Cardiac septum (tissue), 1 donor: ENCODE measurements at regions of chr5 and their contacts with region 1.

Region 1: DNA sequence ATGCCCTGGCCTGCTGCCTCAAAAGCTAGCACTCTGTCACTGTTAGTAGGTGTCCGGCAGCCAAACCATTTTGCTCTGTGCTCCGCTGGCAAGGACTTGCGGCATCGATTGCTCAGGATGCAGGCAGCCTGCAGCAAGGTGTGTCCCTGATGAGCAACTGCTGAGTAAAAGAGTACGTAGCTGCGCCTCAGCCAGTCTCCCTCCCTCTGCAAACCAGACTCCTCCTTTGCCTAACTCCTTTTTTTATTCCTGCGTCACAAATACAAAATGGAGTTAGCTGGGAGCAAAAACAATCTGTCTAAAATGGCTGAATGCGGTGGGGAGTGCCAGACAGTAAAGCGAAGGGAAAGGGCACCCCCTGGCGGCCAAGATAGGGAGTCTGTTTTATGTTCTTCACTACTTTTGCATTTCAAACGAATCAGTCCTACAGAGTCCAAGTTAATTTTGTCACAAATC is 61.1 kb downstream of the DIAPH1 start:
- DNase-seq: peak; percentile 89

Region 2: DNA sequence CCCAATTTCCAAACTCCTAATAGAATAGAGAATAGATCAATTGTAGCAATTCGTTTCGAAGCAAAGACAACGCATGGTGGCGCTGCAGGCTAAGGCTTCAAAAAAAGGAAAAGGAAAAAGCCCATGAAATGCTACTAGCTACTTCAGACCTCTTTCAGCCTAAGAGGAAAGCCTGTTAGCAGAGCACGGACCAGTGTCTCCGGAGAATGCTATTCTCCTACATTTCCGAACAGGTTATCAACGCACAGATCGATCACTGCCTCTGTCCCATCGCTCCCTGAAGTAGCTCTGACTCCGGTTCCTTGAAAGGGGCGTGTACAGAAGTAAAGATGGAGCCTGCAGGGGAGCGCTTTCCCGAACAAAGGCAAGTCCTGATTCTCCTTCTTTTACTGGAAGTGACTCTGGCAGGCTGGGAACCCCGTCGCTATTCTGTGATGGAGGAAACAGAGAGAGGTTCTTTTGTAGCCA is 312.4 kb before region 1 on chr5 and contains the start of gene PCDHB15:
- intact Hi-C with region 1: loop called (anchors 2 kb)
- DNase-seq: no peak
- total RNA-seq, gene PCDHB15: 9.9 TPM

Region 3: GRCh38 chr5:141320225-141321169 is 237.2 kb before region 1 on chr5 and contains the start of gene TAF7:
- intact Hi-C with region 1: loop called (anchors 2 kb)
- DNase-seq: peak; percentile 95
- total RNA-seq, gene TAF7: 116 TPM

Region 4: DNA sequence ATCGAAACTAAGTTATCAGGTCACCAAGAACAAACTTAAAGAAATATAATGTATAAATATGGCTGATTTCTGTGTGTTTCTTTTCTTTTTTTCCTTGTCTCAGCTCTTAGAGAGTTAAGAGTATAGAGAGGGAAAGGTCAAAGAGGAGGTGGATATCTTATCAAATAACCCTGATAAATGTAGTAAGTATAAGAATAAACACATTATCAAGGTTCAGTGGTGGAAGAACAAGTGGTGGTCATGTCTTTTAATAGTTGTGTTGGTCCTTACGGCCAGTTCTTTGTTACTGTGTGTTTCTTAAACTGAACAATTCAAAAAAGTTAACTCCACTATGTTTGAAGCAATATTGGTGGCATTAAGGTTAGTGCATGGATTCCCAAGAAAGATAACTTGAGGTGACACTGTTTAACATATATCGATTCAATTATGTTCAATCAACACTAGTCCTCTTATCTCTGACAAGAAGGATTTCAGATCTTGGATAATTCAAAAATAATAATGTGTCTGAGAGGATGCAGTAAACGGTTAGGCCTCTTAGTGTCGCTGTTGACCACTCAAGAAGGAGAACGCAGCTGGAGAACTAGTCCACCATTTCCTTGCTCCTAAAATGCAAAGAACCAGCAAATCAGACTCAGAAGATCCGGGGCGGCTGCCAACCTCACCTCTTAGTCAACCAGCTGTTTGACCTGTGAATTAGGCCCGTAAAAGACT is 214.3 kb before region 1 on chr5 and contains the start of gene PCDHGA3:
- intact Hi-C with region 1: loop called (anchors 2 kb)
- DNase-seq: no peak
- total RNA-seq, gene PCDHGA3: 22.9 TPM

Region 5: GRCh38 chr5:141402553-141403260 is 155.0 kb before region 1 on chr5 and contains the start of gene PCDHGA9:
- intact Hi-C with region 1: no loop called
- DNase-seq: no peak
- total RNA-seq, gene PCDHGA9: 9.6 TPM

Region 6: GRCh38 chr5:141412854-141413539 is 144.7 kb before region 1 on chr5 and contains the start of gene PCDHGA10:
- intact Hi-C with region 1: loop called (anchors 2 kb)
- DNase-seq: no peak
- total RNA-seq, gene PCDHGA10: 11.0 TPM

Region 7: DNA sequence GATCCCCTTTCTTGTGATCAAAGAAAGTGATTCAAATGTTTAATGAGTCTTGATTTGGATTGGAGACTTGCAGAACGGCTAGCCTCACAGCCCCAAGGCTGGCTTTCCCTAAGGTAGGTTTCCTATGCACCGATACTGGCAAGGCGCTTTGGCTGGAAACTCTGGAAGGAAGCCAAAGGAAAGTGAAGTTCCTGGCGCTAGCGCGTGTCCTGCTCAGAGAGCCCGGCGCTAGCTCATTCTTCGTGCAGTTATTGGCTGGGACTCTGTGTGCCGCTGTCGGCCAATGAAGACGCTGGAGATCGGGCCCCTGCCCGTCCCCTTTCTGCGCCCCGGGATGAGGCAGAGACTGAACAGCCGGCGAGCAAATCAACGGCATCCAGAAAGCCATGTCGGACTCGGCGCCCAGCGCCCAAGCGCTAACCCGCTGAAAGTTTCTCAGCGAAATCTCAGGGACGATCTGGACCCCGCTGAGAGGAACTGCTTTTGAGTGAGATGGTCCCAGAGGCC is 82.0 kb before region 1 on chr5 and contains the start of gene PCDHGC3:
- intact Hi-C with region 1: loop called (anchors 2 kb)
- DNase-seq: peak; percentile 94
- total RNA-seq, gene PCDHGC3: 16.9 TPM

Region 8: GRCh38 chr5:141618804-141619554 is 61.3 kb after region 1 on chr5 and contains the start of gene DIAPH1:
- intact Hi-C with region 1: no loop called
- DNase-seq: peak; percentile 99
- total RNA-seq, gene DIAPH1: 77.7 TPM